ENCODE measurements at regions of chr7 and their contacts with region 1.

Region 1: GRCh38 chr7:17298207-17298839 is at the start of gene AHR:
- DNase-seq: peak; percentile 96
- H3K4me3 Mint-ChIP-seq: peak within 1 kb of the TSS; percentile 85
- H3K27ac Mint-ChIP-seq: peak within 1 kb of the TSS; percentile 93
- H3K4me1 Mint-ChIP-seq: peaks cover 28% of the 10 kb centered on the region
- H3K27me3 Mint-ChIP-seq: no peaks in the 10 kb centered on the region
- CTCF ChIP-seq: no peak
- total RNA-seq, gene AHR: 280 and 288 TPM in 2 replicates

Region 2: GRCh38 chr7:17009007-17009719 is 289.2 kb before region 1 on chr7:
- CTCF ChIA-PET with region 1: interaction called, 12 read pairs
- intact Hi-C with region 1: loop called (anchors 5 kb)
- DNase-seq: no peak
- H3K4me3 Mint-ChIP-seq: no peak overlapping the region
- H3K27ac Mint-ChIP-seq: peak overlapping the region; percentile 58
- H3K4me1 Mint-ChIP-seq: peaks cover 87% of the 10 kb centered on the region
- H3K27me3 Mint-ChIP-seq: no peaks in the 10 kb centered on the region
- CTCF ChIP-seq: peak; percentile 67

Region 3: GRCh38 chr7:17234398-17235031 is 63.8 kb before region 1 on chr7:
- CTCF ChIA-PET with region 1: no interaction called
- intact Hi-C with region 1: loop called (anchors 2 kb)
- DNase-seq: peak; percentile 76
- H3K4me3 Mint-ChIP-seq: peak overlapping the region; percentile 50
- H3K27ac Mint-ChIP-seq: peak overlapping the region; percentile 96
- H3K4me1 Mint-ChIP-seq: peaks cover 94% of the 10 kb centered on the region
- H3K27me3 Mint-ChIP-seq: peaks cover 12% of the 10 kb centered on the region
- CTCF ChIP-seq: no peak

Region 4: DNA sequence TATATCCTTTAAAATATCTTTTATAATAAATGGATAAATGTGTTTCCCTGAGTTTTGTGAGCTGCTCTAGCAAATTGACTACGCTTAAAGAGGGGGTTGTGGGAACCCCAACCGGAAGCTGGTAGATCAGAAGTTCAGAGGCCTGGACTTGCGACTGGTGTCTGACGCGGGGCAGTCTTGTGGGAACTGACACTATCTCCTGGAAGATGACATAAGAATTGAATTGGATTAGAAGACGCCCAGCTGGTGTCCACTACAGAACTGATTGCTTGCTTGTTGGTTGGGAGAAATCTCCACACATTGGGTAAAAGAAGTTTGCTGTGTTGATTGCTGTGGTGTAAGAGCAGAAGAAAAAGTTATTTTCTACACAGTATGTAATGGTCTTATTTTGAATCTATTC is 51.0 kb before region 1 on chr7:
- CTCF ChIA-PET with region 1: interaction called, 4 read pairs
- intact Hi-C with region 1: loop called (anchors 2 kb)
- DNase-seq: no peak
- H3K4me3 Mint-ChIP-seq: no peak overlapping the region
- H3K27ac Mint-ChIP-seq: peak overlapping the region; percentile 48
- H3K4me1 Mint-ChIP-seq: peaks cover 44% of the 10 kb centered on the region
- H3K27me3 Mint-ChIP-seq: no peaks in the 10 kb centered on the region
- CTCF ChIP-seq: no peak

Region 5: DNA sequence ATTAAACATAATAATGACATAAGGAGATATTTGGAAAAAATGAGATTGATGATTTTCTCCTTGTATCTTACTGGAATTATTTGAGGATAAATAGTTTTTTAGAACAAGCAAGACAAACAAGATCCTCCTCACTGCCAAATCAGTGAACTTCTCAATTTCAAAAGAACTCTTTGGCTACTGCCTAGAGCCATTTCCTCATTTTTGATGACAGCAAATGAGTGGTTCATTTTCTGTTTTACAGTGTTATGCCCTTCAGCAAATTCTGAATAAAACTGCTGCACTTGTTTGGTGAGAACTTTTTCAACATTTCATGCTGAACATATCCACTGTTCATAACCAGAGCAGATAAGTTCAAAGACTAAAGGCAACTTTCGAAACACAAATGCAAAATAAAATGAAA is 42.4 kb before region 1 on chr7:
- CTCF ChIA-PET with region 1: interaction called, 4 read pairs
- intact Hi-C with region 1: loop called (anchors 1 kb)
- DNase-seq: no peak
- H3K4me3 Mint-ChIP-seq: no peak overlapping the region
- H3K27ac Mint-ChIP-seq: no peak overlapping the region
- H3K4me1 Mint-ChIP-seq: peaks cover 49% of the 10 kb centered on the region
- H3K27me3 Mint-ChIP-seq: no peaks in the 10 kb centered on the region
- CTCF ChIP-seq: no peak

Region 6: DNA sequence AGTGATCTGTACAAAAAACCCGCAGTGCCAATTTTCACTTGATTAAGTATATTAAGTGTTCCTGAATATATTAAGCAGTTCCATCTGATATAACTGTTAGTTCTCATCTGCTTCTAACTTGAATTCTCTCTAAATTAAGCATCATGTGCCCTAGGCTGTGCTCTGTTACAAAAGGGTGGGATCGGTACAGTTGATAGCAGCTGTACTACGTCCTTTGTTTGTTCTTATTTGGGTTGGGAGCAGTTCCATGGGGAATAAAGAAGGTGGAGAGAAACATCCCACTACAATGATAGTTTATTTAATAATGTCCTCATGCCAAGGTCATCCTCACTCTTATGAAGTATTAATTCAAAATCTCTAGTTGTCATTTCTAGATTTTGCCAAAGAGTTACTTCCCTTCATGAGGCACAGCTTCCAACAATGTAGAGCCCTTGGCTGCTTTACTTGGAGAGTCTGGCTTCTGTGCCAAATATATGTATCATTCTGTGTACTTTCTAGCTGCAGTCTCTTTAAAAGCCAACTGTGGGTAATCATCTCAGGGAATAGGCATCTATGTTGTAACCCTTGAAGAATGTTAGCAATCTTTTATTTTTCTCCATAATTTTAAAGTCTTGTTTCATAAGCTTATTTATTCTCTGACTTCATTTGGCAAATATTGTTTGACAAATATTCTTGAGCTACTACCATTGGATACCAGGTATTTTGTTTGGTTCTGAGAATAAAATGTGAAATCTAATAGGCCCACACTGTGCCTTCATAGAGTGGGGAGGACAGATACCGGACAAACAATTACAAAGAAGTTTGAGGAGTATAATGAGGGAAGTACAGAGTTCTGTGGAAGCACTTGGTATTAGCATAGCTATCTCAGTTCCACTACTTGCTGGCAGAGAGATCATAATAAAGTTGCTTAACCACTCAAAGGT is 22.3 kb before region 1 on chr7:
- CTCF ChIA-PET with region 1: interaction called, 38 read pairs
- intact Hi-C with region 1: no loop called
- DNase-seq: no peak
- H3K4me3 Mint-ChIP-seq: peak overlapping the region; percentile 55
- H3K27ac Mint-ChIP-seq: peak overlapping the region; percentile 89
- H3K4me1 Mint-ChIP-seq: peaks cover 56% of the 10 kb centered on the region
- H3K27me3 Mint-ChIP-seq: no peaks in the 10 kb centered on the region
- CTCF ChIP-seq: no peak